B cell (primary cell): ENCODE measurements at regions of chr11 and their contacts with region 1.

Region 1: DNA sequence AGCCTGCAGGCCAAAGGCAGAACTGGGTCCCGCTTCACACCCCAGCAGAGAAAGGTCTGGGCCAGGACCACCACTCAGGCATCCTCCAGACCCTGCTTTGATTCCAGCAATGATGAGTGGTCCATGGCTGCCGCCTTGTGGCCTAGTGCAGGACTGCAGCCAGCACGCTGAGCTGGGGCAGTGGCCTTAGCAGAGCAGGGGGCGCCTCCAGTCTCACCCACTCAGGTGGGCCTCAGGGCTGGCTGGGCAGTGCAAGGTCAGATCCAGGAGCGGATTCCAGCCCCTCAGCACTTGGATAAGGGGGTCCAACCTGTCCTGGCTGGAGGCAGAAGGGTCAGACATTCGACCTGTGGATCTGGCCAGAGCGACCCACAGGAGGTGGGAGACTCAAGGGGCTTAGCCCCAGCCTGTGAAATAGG is 9.6 kb upstream of the PDE2A start:
- DNase-seq: peak; percentile 76
- ATAC-seq: peak; percentile 74
- H3K4me3 ChIP-seq: no peak overlapping the region
- H3K4me3 Mint-ChIP-seq: no peak overlapping the region
- H3K27ac ChIP-seq: peak overlapping the region in 1 of 2 donors; percentile 11
- H3K27ac Mint-ChIP-seq: no peak overlapping the region
- H3K4me1 ChIP-seq: no peaks in the 10 kb centered on the region
- H3K4me1 Mint-ChIP-seq: peaks cover 6% of the 10 kb centered on the region
- H3K27me3 ChIP-seq: no peaks in the 10 kb centered on the region
- H3K27me3 Mint-ChIP-seq: no peaks in the 10 kb centered on the region
- CTCF ChIP-seq: peak; percentile 95

Region 2: GRCh38 chr11:72471005-72471898 is 212.5 kb before region 1 on chr11:
- CTCF ChIA-PET with region 1: interaction called, 39 read pairs
- POLR2A ChIA-PET with region 1: no interaction called
- intact Hi-C with region 1: no loop called
- DNase-seq: peak; percentile 74
- ATAC-seq: peak; percentile 62
- H3K4me3 ChIP-seq: no peak overlapping the region
- H3K4me3 Mint-ChIP-seq: peak overlapping the region; percentile 14
- H3K27ac ChIP-seq: no peak overlapping the region
- H3K27ac Mint-ChIP-seq: no peak overlapping the region
- H3K4me1 ChIP-seq: peaks cover 0 to 7% of the 10 kb centered on the region in 2 donors
- H3K4me1 Mint-ChIP-seq: peaks cover 4% of the 10 kb centered on the region
- H3K27me3 ChIP-seq: peaks cover 0 to 29% (median 10%) of the 10 kb centered on the region in 4 experiments
- H3K27me3 Mint-ChIP-seq: peaks cover 40% of the 10 kb centered on the region
- CTCF ChIP-seq: peak; percentile 89

Region 3: GRCh38 chr11:72483412-72484186 is 200.2 kb before region 1 on chr11:
- CTCF ChIA-PET with region 1: interaction called, 7 read pairs
- POLR2A ChIA-PET with region 1: no interaction called
- intact Hi-C with region 1: loop called (anchors 5 kb)
- DNase-seq: no peak
- ATAC-seq: no peak
- H3K4me3 ChIP-seq: no peak overlapping the region
- H3K4me3 Mint-ChIP-seq: no peak overlapping the region
- H3K27ac ChIP-seq: no peak overlapping the region
- H3K27ac Mint-ChIP-seq: no peak overlapping the region
- H3K4me1 ChIP-seq: peaks cover 0 to 6% of the 10 kb centered on the region in 2 donors
- H3K4me1 Mint-ChIP-seq: no peaks in the 10 kb centered on the region
- H3K27me3 ChIP-seq: peaks cover 0 to 20% (median 10%) of the 10 kb centered on the region in 4 experiments
- H3K27me3 Mint-ChIP-seq: peaks cover 36% of the 10 kb centered on the region
- CTCF ChIP-seq: no peak

Region 4: DNA sequence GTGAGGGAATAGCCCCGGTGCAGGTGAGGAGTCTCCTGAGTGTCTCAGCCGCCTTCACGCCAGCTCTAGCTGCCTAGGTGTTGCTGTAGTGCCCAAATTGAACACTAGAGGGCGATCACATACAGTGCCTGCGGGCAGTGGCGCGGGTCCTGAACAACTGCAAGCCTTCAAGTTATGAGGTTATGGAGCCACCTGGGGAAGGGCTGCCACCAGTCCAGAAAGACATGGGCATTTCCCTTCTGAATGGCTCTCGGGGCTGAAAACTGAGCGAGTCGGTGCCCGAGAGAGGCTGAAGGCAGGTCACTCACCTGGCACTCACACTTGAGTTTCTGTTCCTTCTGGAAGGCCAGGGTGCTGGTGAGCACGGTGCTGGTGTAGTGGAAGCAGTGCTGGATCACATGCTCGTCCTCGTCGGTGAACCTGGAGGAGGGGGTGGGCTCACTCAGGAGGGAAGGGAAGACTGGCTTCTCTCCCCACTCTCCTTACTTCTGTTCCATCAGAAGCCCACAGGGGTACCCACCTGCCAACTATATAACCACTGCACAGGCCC is 98.0 kb before region 1 on chr11:
- CTCF ChIA-PET with region 1: interaction called, 64 read pairs
- POLR2A ChIA-PET with region 1: no interaction called
- intact Hi-C with region 1: loop called (anchors 1 kb)
- DNase-seq: peak; percentile 88
- ATAC-seq: peak; percentile 77
- H3K4me3 ChIP-seq: peak overlapping the region in 1 of 5 experiments; percentile 58
- H3K4me3 Mint-ChIP-seq: peak overlapping the region; percentile 97
- H3K27ac ChIP-seq: no peak overlapping the region
- H3K27ac Mint-ChIP-seq: peak overlapping the region; percentile 63
- H3K4me1 ChIP-seq: peaks cover 31 to 32% of the 10 kb centered on the region in 2 donors
- H3K4me1 Mint-ChIP-seq: peaks cover 37% of the 10 kb centered on the region
- H3K27me3 ChIP-seq: peaks cover 0 to 50% (median 12%) of the 10 kb centered on the region in 4 experiments
- H3K27me3 Mint-ChIP-seq: peaks cover 23% of the 10 kb centered on the region
- CTCF ChIP-seq: peak; percentile 95

Region 5: DNA sequence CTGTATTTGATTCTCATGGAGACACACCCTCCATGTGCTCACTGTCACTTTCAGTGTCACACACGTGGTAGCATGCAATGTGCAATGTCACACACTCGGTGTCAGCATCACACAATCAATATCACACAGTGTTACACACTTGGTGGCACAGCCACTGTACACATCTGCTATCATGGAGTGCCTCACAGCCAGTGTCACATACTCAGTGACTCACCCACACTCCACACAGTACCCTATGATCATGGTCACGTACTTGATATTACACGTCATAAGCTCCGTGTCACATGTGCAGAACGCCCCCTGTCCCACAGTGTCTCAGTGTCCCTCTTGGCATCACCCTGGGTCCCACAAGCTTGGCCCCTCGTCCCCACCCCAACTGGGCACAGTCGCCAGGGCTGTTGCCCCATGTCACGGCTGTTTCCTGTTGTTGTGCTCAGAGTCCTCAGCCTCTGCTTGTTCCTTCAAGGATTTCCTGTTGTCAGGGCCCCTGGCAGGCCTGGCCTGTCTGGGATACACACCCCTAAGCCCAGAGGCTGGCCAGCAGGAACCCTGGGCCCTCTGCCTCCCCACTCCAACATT is 59.1 kb before region 1 on chr11:
- CTCF ChIA-PET with region 1: no interaction called
- POLR2A ChIA-PET with region 1: no interaction called
- intact Hi-C with region 1: no loop called
- DNase-seq: no peak
- ATAC-seq: no peak
- H3K4me3 ChIP-seq: no peak overlapping the region
- H3K4me3 Mint-ChIP-seq: no peak overlapping the region
- H3K27ac ChIP-seq: no peak overlapping the region
- H3K27ac Mint-ChIP-seq: no peak overlapping the region
- H3K4me1 ChIP-seq: peaks cover 3 to 20% of the 10 kb centered on the region in 2 donors
- H3K4me1 Mint-ChIP-seq: peaks cover 25% of the 10 kb centered on the region
- H3K27me3 ChIP-seq: no peaks in the 10 kb centered on the region
- H3K27me3 Mint-ChIP-seq: peaks cover 7% of the 10 kb centered on the region
- CTCF ChIP-seq: no peak

Region 6: GRCh38 chr11:72642884-72643511 is 40.8 kb before region 1 on chr11:
- CTCF ChIA-PET with region 1: interaction called, 6 read pairs
- POLR2A ChIA-PET with region 1: no interaction called
- intact Hi-C with region 1: loop called (anchors 1 kb)
- DNase-seq: peak; percentile 87
- ATAC-seq: peak; percentile 82
- H3K4me3 ChIP-seq: peak overlapping the region in 4 of 5 experiments; percentile 27 to 54 (median 36)
- H3K4me3 Mint-ChIP-seq: peak overlapping the region; percentile 79
- H3K27ac ChIP-seq: no peak overlapping the region
- H3K27ac Mint-ChIP-seq: peak overlapping the region; percentile 4
- H3K4me1 ChIP-seq: peaks cover 13 to 16% of the 10 kb centered on the region in 2 donors
- H3K4me1 Mint-ChIP-seq: peaks cover 4% of the 10 kb centered on the region
- H3K27me3 ChIP-seq: peaks cover 0 to 51% (median 22%) of the 10 kb centered on the region in 4 experiments
- H3K27me3 Mint-ChIP-seq: peaks cover 14% of the 10 kb centered on the region
- CTCF ChIP-seq: peak; percentile 99

Region 7: DNA sequence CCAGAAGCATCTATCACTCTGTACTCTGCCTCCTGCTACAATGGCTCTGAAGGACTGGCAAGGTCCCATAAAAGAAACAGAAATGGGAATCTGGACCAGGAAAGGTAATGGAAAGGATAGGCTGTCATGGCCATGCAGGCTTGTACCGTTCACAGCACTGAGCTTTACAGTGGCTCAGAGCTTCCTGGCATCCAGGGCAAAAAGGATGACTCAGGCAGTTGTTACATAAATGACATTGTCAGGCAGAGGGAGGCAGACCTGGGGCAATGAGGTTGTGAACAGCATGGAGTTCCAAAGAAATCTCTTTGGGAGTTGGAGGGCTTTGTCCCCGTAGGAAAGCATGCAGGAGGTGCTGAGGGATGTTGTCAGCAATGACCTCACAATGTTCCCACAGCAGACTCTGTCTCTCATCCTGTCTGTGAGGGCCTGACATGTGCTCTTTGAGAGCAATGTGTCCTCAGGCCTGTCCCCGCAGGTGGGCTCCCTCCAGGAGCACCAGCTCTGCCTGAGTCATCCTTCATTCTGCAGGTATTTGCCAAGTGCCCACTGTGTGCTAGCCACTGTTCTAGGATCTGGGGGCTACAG is 16.3 kb after region 1 on chr11:
- CTCF ChIA-PET with region 1: interaction called, 13 read pairs
- POLR2A ChIA-PET with region 1: no interaction called
- intact Hi-C with region 1: no loop called
- DNase-seq: no peak
- ATAC-seq: no peak
- H3K4me3 ChIP-seq: no peak overlapping the region
- H3K4me3 Mint-ChIP-seq: no peak overlapping the region
- H3K27ac ChIP-seq: no peak overlapping the region
- H3K27ac Mint-ChIP-seq: peak overlapping the region; percentile 5
- H3K4me1 ChIP-seq: no peaks in the 10 kb centered on the region
- H3K4me1 Mint-ChIP-seq: no peaks in the 10 kb centered on the region
- H3K27me3 ChIP-seq: no peaks in the 10 kb centered on the region
- H3K27me3 Mint-ChIP-seq: no peaks in the 10 kb centered on the region
- CTCF ChIP-seq: no peak

Region 8: DNA sequence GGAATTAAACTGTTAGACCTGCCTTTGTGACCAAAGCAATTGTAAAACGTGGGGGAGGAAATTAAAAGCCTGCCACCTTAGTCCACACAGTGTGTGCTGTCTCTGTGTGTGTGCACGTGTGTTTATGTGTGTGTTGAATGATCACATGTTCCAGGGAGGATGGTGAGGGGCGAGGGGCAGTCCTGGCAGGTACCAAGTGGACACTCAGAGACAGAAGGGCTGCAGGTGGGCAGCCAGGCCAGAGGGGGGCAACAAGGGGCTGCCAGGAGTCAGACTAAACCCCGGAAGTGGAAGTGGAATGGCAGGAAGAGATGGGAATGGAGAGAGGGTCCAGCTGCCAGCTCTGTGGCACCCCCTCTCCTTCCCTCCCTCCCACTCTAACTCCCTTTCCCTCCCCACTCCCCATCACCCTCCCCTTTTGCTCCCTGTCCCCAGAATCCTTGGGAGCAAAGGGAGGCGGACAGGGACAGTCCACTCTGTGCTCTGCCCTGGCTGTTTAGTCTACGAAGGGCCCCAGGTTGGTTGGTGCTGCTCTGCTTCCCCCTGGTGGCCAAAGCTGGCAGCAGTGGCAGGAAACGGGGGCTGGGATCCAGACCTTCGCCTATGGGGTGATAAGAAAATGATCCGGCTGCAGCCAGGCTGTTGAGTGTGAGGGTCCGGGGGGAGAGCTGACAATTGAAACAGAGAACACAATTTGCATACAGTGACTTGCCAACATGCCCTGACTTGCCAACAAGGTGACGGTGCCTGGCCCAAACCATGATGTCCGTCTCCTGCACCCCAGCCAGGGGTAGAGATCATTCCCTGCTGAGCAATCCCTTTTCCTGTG is 558.7 kb after region 1 on chr11:
- CTCF ChIA-PET with region 1: interaction called, 3 read pairs
- POLR2A ChIA-PET with region 1: interaction called, 12 read pairs
- intact Hi-C with region 1: loop called (anchors 1 kb)
- DNase-seq: peak; percentile 81
- ATAC-seq: peak; percentile 89
- H3K4me3 ChIP-seq: no peak overlapping the region
- H3K4me3 Mint-ChIP-seq: no peak overlapping the region
- H3K27ac ChIP-seq: no peak overlapping the region
- H3K27ac Mint-ChIP-seq: no peak overlapping the region
- H3K4me1 ChIP-seq: peaks cover 4 to 7% of the 10 kb centered on the region in 2 donors
- H3K4me1 Mint-ChIP-seq: peaks cover 6% of the 10 kb centered on the region
- H3K27me3 ChIP-seq: peaks cover 0 to 2% (median 0%) of the 10 kb centered on the region in 4 experiments
- H3K27me3 Mint-ChIP-seq: peaks cover 3% of the 10 kb centered on the region
- CTCF ChIP-seq: peak; percentile 79